ENCODE measurements at regions of chr7 and their contacts with region 1.

Region 1: DNA sequence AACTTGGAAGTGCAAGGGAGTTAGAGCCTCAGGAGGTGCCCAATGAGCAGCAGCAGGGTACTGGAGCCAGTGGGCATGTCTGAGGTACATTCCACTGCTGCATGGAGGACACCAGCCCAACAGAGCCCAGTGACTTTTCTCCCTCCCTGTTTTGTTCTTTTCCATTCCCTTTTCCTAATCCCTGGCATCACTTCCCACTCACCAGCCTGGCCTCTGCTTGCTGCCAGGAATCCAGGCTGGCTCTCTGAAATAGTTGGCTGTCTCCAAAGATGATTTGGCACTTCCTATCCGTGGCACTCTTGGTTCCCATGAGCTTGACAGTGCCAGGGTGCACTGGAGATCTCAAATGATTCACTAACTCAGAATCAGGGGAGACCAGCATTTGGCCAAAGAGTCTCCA is 97.7 kb upstream of the ZPBP start:
- DNase-seq: no peak
- ATAC-seq: no peak
- H3K4me3 ChIP-seq: no peak overlapping the region
- H3K4me3 Mint-ChIP-seq: no peak overlapping the region
- H3K27ac ChIP-seq: no peak overlapping the region
- H3K27ac Mint-ChIP-seq: no peak overlapping the region
- H3K4me1 ChIP-seq: no peaks in the 10 kb centered on the region
- H3K4me1 Mint-ChIP-seq: no peaks in the 10 kb centered on the region
- H3K27me3 ChIP-seq: peaks cover 0 to 4% of the 10 kb centered on the region in 2 experiments
- H3K27me3 Mint-ChIP-seq: no peaks in the 10 kb centered on the region
- CTCF ChIP-seq: no peak

Region 2: GRCh38 chr7:50156706-50157105 is 34.1 kb before region 1 on chr7:
- CTCF ChIA-PET with region 1: no interaction called
- POLR2A ChIA-PET with region 1: no interaction called
- intact Hi-C with region 1: loop called in 1 of 2 experiments (anchors 5 kb)
- DNase-seq: peak in 1 of 14 experiments; percentile 11
- ATAC-seq: peak; percentile 17
- H3K4me3 ChIP-seq: no peak overlapping the region
- H3K4me3 Mint-ChIP-seq: peak overlapping the region; percentile 40
- H3K27ac ChIP-seq: no peak overlapping the region
- H3K27ac Mint-ChIP-seq: peak overlapping the region; percentile 73
- H3K4me1 ChIP-seq: peaks cover 17% of the 10 kb centered on the region
- H3K4me1 Mint-ChIP-seq: peaks cover 22% of the 10 kb centered on the region
- H3K27me3 ChIP-seq: no peaks in the 10 kb centered on the region
- H3K27me3 Mint-ChIP-seq: no peaks in the 10 kb centered on the region
- CTCF ChIP-seq: no peak

Measured in CD4-positive, alpha-beta T cell (primary cell).